ENCODE measurements at regions of chr15 and their contacts with region 1.

Region 1: GRCh38 chr15:68650901-68651709 is 72.3 kb downstream of the CORO2B start:
- DNase-seq: peak; percentile 22
- H3K4me3 Mint-ChIP-seq: no peak overlapping the region
- H3K27ac Mint-ChIP-seq: no peak overlapping the region
- H3K4me1 Mint-ChIP-seq: no peaks in the 10 kb centered on the region
- H3K27me3 Mint-ChIP-seq: peaks cover 2% of the 10 kb centered on the region

Region 2: DNA sequence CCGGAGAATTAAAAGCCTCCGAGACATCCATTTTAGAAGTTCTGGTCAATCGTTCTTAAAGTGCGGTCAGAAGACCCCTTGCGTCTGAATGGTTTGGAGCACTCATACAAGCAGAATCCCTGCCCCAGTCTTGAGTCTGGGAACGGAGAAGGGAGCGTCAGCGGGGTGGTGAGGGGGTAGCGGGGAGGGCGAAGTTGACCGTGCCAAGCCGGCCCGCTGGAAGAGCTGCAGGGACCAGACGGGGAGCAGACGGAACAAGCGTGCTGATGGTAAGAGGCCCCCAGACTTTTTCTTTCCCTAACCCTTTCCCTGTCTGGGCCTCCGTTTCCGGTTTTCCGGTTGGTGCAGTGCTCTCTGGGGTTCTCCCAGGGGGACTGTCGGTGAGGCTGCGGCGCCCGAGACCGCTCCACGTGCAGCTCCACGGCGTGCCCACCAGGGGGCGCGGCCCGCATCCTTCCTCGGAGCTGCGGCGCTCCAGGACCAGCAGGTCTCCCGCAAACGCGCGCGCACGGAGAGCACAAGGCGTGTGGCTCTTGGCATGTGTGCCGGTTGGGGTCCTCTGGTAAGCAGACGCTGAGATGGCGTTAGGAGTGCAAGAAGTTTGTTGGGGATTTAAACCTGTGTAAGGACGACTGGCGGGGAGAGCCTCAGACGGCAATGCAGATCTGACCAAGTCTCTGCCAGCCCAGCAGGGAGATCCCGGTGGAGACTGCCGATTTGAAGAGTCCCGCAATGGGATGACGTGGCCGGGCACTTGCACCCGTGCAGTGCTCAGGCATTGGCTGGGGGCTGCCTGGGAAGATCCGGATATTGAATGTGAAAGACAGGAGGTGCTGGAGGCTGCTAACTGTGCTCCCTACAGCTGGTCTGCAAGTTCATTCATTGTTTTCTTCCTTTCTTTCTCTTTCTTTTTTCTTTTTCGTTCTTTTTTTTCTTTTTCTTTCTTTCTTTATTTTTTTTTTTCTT is 91.5 kb before region 1 on chr15:
- intact Hi-C with region 1: loop called (anchors 5 kb)
- DNase-seq: peak; percentile 65
- H3K4me3 Mint-ChIP-seq: peak overlapping the region; percentile 73
- H3K27ac Mint-ChIP-seq: no peak overlapping the region
- H3K4me1 Mint-ChIP-seq: peaks cover 15% of the 10 kb centered on the region
- H3K27me3 Mint-ChIP-seq: peaks cover 51% of the 10 kb centered on the region

Measured in activated T-helper 2 cell treated with anti-CD3 and anti-CD28 coated beads, Interferon-gamma antibody, Interleukin-2, Interleukin-4, amounts not matched to agents 10 μg/mL and 5 μg/mL and 100 μg/mL, durations not matched to agents 14 hours and 24 hours and 36 hours (primary cell).